Ascending aorta (tissue), 2 donors: ENCODE measurements at regions of chrX and their contacts with region 1.

Region 1: DNA sequence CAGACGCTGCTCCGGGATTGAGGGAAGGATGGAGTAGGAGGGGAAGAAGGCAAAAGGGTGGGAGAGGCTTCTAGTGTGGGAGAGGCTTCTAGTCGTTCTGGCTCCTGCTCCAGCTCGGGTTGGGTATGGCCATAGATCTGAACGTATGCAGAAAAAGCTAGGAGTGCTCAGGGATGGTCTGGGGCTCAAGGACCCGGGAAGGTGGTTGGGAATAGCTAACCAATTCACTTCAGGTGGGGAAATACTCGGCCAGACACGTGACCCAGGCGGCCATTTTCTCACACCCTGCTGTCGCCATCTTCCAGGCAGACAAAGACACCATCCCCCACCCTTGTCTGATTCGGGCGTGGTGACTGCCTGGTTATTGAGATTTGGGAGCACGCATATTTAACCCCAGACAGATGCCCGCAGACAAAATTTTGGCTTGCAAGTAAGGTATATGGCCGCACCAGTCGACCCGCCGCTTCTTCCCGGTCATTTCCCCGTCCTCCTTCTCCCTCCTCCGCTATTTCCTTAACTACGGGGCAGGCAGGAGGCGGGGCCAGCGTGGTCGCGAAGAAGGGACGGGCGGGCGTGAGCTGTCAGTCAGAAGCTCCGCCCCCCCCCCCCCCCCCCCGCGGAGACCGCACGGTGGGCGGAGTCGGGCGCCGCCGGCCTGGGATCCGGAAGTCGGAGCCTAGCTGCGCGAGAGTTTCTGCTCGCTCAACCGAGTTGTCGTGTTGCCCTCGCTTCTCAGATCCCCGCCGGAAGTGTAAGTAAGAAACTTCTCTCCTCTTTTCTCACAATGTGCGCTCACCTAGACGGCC is at the start of gene GNL3L:
- DNase-seq: peak; percentile 60 to 92
- H3K4me3 ChIP-seq: peak within 1 kb of the TSS; percentile 69 to 79
- H3K27ac ChIP-seq: peak within 1 kb of the TSS; percentile 65 to 73
- H3K4me1 ChIP-seq: no peaks in the 10 kb centered on the region
- H3K27me3 ChIP-seq: no peaks in the 10 kb centered on the region
- CTCF ChIP-seq: no peak
- total RNA-seq, gene GNL3L: 15.4 TPM

Region 2: DNA sequence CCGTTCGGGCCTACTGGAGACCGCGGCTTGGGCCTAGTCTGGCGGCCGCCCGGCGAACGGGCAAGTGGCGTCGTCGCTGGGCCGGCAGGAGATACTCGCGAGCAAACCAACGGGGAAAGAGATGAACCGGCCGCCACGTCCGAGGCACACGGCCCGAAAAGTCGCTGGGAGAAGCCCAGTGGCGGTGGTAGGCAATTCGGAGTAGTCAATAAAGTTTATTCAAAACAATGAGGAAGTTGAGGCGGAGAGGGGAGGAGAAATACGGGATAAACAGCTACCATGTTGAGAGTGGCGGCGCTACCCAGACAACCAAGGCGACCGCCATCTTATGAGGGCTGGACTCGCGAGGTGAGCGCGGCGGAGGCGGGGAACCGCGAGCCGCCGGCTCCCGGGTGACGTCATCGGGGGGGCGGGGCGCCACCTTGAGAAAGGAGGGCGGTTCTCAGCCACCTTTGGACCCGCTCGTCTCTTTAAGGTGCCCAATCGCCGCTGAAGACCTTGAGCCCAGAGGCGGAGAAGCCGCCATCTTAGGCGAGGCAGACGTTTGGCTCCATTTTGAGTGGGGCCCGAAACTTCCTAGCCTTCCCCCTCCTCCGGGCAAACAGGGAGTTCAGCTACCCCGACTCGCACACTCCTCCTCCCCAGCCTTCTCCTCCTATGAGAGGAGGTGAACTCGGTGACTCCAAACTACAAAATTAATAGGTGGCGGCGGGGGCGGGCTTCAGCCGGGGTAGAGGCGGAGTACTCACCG is 485.5 kb before region 1 on chrX and contains the start of gene PHF8:
- intact Hi-C with region 1: loop called (anchors 2 kb)
- DNase-seq: peak; percentile 78 to 97
- H3K4me3 ChIP-seq: peak within 1 kb of the TSS; percentile 64 to 73
- H3K27ac ChIP-seq: peak within 1 kb of the TSS; percentile 85 to 96
- H3K4me1 ChIP-seq: no peaks in the 10 kb centered on the region
- H3K27me3 ChIP-seq: no peaks in the 10 kb centered on the region
- CTCF ChIP-seq: no peak
- total RNA-seq, gene PHF8: 41.6 TPM

Region 3: DNA sequence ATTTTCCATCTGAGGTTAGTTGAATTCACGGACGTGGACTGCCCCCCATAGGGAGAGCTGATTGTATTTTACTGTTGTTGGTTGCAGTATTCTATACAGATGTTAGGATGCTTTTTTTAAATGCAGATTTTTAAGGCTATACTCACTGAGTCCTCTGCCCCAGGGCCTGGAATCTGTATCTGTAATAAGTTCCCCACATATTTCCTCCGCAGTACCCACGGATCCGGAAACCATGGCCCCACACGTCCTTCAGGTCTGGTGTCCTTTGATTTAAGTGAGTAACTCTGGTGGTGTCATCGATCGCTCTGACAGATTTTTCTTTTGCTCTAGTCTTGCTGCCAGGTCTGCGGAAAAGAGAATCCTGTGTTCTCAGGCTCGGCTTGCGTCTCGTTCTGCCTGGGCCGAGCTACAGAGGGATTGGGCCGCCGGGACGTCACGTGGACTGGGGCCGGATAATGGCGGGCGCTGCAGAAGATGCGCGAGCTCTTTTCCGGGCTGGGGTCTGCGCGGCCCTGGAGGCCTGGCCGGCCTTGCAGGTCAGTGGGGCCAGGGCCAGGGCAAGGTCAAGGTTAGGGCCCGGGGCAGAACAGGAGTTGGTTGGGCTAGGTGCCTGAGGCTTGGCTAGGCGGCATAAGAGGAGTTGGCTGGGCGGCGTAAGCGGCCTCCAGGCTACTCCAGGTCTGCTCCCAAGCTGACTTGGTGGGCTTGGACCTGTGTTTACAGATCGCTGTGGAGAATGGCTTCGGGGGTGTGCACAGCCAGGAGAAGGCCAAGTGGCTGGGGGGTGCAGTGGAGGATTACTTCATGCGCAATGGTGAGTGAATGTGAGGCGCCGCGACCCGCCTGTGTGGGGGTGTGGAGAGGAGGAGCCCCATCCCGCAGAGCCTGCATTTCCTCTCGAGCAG is 89.5 kb before region 1 on chrX and contains the start of gene TSR2:
- intact Hi-C with region 1: loop called (anchors 1 kb)
- DNase-seq: peak; percentile 63 to 88
- H3K4me3 ChIP-seq: peak within 1 kb of the TSS; percentile 54 to 89
- H3K27ac ChIP-seq: peak within 1 kb of the TSS; percentile 38 to 56
- H3K4me1 ChIP-seq: peaks cover 0 to 6% of the 10 kb centered on the region in 2 donors
- H3K27me3 ChIP-seq: no peaks in the 10 kb centered on the region
- CTCF ChIP-seq: peak in 1 of 3 experiments; percentile 26
- total RNA-seq, gene TSR2: 14.0 TPM

Region 4: DNA sequence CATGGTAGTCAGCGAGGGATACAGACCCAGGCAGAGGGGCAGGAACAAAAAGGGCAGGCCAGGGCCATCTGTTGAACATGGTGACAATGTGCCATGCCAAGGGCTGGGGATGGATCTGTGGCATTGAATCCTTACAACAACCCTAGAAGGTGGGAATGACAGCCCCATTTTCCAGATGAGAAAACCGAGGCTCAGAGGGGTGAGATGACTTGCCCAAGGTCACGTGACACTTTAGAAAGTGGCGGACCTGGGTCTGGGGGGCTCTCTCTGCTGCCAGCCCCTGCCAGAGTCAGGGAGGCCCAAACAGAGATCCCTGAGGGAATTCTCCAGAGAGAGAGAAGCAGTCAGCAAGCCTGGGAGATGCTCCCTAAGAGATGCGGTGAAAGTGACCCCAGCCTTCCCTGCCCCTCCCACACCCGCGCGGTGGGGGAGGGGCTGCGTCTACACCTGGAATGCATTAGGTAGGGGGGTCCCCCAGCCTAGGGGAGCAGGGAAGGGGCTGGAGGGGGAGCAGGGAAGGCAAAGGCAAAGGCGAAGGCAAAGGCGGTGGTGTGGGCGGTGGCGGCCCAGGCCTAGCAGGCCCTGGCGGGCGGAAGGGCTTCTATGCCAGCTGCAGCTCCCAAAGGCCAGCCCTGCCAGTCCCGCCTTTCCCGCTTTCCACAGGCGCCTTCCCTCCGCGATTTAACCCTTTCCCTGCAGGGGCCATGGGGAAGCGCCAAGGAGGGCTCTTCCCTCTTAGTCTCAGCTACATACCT is 46.7 kb before region 1 on chrX:
- intact Hi-C with region 1: loop called (anchors 2 kb)
- DNase-seq: no peak
- H3K4me3 ChIP-seq: peak overlapping the region; percentile 26 to 51
- H3K27ac ChIP-seq: peak overlapping the region; percentile 67 to 69
- H3K4me1 ChIP-seq: peaks cover 0 to 3% of the 10 kb centered on the region in 2 donors
- H3K27me3 ChIP-seq: no peaks in the 10 kb centered on the region
- CTCF ChIP-seq: no peak

Region 5: DNA sequence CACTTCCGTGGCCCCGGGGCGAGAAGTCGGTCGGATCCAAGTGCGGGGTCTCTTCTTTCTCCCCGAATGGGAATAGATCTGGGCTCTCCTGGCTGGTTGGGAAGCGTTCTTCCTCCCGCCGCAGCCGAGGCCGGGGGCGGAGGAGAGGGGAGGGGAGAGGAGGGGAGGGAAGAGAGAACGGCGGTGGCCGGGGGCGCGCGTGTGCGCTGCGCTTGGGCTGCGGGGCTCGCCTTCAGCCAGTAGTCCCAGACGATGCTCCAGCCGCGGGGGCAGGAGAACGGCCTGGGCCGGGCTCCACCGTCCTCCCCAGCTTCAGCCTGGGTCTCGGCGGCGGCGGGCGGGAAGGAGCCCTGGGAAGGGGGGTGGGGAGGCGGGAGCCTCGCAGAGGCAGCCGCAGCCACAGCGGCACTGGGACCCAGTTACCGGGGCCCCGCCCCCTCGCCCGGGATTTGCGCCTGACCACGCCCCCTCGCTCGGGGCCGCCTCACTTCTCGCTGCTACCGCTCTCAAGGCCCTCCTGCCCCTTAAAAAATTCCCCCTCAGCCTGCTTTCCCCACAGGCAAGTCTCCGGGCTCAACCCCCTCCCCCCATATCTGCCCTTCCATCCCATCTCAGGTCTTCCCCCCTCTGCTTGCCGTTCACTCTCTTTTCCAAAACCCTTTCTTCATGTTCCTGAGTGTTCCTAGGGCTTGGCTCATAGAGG is 33.8 kb before region 1 on chrX and contains the start of gene FGD1:
- intact Hi-C with region 1: loop called (anchors 1 kb)
- DNase-seq: peak in 1 of 2 donors; percentile 76
- H3K4me3 ChIP-seq: peak within 1 kb of the TSS; percentile 74 to 79
- H3K27ac ChIP-seq: peak within 1 kb of the TSS; percentile 73 to 84
- H3K4me1 ChIP-seq: peaks cover 0 to 3% of the 10 kb centered on the region in 2 donors
- H3K27me3 ChIP-seq: no peaks in the 10 kb centered on the region
- CTCF ChIP-seq: no peak
- total RNA-seq, gene FGD1: 16.5 TPM

Region 6: GRCh38 chrX:54894159-54894558 is 364.4 kb after region 1 on chrX:
- intact Hi-C with region 1: no loop called
- DNase-seq: no peak
- H3K4me3 ChIP-seq: no peak overlapping the region
- H3K27ac ChIP-seq: no peak overlapping the region
- H3K4me1 ChIP-seq: no peaks in the 10 kb centered on the region
- H3K27me3 ChIP-seq: no peaks in the 10 kb centered on the region
- CTCF ChIP-seq: no peak